ENCODE measurements at regions of chr2 and their contacts with region 1.

Region 1: DNA sequence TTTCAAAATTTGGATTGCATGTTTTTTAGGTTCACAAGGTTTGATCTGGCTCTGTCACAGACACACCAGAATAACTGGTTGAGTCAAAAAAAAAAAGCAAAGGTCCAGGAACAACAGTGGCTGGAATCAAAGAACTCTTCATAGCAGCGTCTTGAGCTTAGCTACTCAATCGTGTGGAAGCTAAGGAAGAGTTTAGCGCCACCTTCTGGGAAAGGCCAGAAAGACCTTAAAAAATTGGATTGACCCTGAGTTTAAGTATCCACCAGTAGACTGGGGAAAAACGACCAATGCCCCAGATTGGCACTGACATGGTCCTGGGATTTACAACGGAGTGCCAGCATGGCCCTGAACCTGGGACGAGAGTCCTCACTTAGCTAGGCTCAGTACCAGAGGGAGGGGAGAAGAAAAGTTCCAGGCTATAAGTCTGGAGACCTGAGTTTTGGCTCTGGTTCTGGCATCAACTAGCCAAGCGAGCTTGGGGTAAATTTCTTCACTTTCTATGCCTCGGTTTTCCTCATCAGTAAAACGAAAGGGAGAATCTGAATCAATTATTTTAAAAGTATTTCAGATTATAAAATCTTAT is 71.1 kb upstream of the TFCP2L1 start:
- DNase-seq: no peak
- H3K4me3 Mint-ChIP-seq: no peak overlapping the region
- H3K27ac Mint-ChIP-seq: no peak overlapping the region
- H3K4me1 Mint-ChIP-seq: peaks cover 2% of the 10 kb centered on the region
- H3K27me3 Mint-ChIP-seq: no peaks in the 10 kb centered on the region

Region 2: GRCh38 chr2:121088251-121089165 is 267.6 kb before region 1 on chr2:
- CTCF ChIA-PET with region 1: interaction called, 16 read pairs
- POLR2A ChIA-PET with region 1: no interaction called
- DNase-seq: no peak
- H3K4me3 Mint-ChIP-seq: no peak overlapping the region
- H3K27ac Mint-ChIP-seq: no peak overlapping the region
- H3K4me1 Mint-ChIP-seq: no peaks in the 10 kb centered on the region
- H3K27me3 Mint-ChIP-seq: peaks cover 2% of the 10 kb centered on the region

Region 3: DNA sequence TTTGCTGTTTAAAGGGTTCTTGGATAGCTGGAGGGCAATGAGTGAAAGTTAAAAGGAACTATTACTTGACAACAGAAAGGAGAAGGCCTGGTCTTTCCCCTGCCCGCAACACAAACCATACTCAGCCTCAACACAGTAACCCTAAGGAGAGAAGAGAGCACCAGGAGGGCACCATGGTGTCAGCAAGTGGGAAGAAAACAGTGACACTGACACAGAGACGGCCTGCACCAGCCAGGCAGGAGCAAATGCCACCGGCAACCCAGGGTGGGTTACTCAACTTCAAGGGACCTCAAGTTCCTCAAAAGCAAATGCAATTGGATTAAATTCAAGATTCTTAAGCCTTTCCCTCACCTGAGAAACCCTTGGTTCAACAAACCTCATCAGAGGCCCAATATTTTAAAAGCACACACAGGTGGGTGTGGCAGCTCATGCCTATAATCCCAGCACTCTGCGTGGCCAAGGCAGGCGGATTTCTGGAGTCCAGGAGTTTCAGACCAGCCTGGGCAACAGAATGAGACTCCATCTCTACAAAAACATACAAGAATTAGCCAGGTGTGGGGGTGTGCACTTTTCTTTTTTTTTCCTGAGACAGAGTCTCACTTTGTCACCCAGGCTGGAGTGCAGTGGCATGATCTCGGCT is 123.4 kb before region 1 on chr2:
- CTCF ChIA-PET with region 1: no interaction called
- POLR2A ChIA-PET with region 1: no interaction called
- DNase-seq: no peak
- H3K4me3 Mint-ChIP-seq: no peak overlapping the region
- H3K27ac Mint-ChIP-seq: no peak overlapping the region
- H3K4me1 Mint-ChIP-seq: no peaks in the 10 kb centered on the region
- H3K27me3 Mint-ChIP-seq: no peaks in the 10 kb centered on the region

Region 4: DNA sequence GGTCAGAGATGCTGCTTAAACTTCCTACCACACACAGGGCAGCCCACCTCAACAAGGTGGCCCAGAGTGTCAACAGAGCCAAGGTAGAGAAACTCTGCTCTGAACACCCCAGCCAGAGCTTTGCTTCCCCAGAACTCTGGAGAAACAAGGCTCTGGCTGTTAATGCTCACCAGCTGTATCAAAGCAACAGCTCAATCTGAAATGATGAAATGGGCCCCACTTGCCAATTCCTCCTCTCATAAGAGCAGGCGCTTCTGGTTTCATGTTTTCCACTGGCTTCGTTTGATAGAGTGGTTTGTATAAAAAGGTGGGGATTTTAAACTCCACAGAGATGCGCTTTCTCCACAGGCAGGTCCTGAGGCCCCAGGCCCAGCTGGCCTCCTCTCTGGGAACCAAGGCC is 10.3 kb before region 1 on chr2:
- CTCF ChIA-PET with region 1: interaction called, 10 read pairs
- POLR2A ChIA-PET with region 1: no interaction called
- DNase-seq: no peak
- H3K4me3 Mint-ChIP-seq: no peak overlapping the region
- H3K27ac Mint-ChIP-seq: no peak overlapping the region
- H3K4me1 Mint-ChIP-seq: no peaks in the 10 kb centered on the region
- H3K27me3 Mint-ChIP-seq: no peaks in the 10 kb centered on the region

Region 5: DNA sequence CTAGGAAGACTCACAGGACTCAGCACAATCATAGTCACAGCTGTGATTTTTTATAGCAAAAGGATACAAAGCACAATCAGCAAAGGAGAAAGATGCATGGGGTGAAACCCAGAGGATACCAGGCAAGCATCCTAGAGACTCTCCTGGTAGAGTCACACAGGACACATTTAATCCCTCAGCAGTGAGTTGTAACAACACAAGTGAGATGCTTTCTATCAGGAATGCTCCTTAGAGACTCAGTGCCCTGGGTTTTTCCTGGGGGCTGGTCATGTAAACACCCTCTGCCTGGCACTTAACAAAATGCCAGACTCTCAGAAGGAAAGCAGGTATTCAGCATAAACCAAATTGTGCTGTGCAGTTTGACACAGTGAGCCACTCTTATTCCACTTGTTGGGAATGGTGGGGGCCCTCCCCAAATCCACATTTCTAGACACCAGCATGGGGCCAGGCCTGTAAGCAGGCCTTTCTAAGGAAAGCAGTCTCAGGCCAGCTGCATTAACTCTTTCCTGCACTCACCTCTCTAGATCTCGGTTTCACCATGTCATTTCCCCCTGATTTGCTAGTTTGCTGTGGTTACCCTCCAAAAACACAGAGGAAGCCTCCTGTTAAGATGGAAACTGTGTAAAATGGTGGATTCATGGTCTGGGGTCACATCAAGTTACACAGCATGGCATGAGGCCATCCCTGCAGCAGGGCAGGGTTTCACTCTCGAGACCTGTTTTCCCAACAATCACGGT is 157.6 kb after region 1 on chr2:
- CTCF ChIA-PET with region 1: no interaction called
- POLR2A ChIA-PET with region 1: no interaction called
- DNase-seq: no peak
- H3K4me3 Mint-ChIP-seq: no peak overlapping the region
- H3K27ac Mint-ChIP-seq: peak overlapping the region; percentile 13
- H3K4me1 Mint-ChIP-seq: peaks cover 7% of the 10 kb centered on the region
- H3K27me3 Mint-ChIP-seq: no peaks in the 10 kb centered on the region

Measured in activated CD4-positive, alpha-beta memory T cell treated with anti-CD3 and anti-CD28 coated beads, Interleukin-2, amount 10 ng/mL, durations not matched to agents 7 days and 5 days (primary cell).